Left cardiac atrium (tissue), 4 donors: ENCODE measurements at regions of chr14 and their contacts with region 1.

Region 1: GRCh38 chr14:73785873-73786695 is 65.5 kb upstream of the PTGR2 start:
- DNase-seq: peak; percentile 83
- ATAC-seq: peak; percentile 72 to 75

Region 2: DNA sequence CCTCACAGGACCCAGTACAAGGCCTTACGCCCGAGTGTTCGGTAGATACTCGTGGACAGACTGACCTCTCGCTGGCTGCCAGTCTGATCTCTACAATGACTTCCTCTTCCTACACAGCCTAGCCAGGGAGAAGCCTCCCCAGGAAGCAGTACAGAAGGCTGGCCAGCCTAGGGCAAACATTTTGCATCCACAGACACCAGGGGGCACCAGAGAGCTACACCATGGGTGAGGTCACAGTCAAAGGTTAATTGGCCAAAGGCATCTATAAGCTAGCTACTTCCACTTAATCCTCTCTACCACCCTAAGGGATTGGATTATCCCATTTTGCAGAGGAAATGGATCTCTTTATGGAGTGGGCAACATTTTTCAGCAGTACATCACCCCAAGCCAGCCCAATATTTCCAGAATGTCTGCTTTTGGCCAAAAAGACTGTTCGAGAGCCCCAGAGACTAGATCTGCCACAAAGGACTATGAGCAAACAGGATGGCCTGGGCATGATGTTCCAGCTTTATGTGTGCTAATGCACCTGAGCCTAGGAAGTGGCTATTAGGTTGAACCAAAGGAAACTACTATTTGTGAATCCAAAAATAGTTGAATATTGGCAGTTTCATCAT is 57.3 kb before region 1 on chr14:
- intact Hi-C with region 1: loop called (anchors 10 kb)
- DNase-seq: peak; percentile 89
- ATAC-seq: peak; percentile 60 to 62

Region 3: GRCh38 chr14:73741386-73741875 is 44.7 kb before region 1 on chr14:
- intact Hi-C with region 1: loop called (anchors 5 to 10 kb)
- DNase-seq: peak; percentile 85
- ATAC-seq: peak; percentile 70 to 85

Region 4: DNA sequence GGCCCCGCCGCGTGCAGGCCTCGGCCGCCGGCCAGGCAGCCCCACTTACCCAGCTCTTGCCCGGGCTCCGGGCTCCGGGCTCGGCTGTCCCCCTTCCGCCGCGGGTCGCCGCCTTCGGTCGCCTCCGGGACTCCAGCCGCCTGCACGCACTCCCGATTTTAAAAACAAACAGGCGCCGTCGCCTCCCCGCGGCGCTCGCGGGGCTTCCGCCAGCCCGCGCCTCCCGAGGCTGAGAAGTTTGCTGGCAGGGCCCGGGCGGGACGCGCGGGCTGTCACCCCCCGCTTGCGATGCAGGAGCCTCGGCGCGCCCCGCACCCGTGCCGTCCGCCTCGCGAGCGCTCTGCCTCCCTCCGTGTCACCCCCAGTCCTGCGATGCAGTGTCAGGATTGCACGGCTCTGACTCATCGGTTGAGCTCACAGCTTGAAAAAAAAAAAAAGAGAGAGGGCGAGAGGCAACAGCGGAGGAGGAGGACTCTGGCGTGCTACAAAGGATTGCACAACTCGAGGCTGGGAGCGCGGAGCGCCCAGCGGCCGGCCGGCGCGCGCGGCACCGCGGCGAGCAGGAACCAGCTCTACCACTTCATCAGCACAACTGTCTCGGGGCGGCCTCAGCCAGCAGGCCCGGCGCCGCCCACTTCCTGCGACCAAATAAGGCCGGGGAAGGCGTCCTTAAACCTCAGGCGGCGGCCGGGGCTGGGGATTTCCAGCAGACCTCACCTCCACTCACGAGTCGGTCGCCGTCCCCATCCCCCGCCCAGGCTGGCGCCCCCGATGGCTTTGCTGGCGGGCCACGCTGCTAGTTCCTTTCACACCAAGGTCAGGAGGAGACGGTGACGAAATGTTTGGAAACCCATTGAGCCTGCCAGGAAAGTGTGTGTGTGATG is 26.1 kb before region 1 on chr14:
- intact Hi-C with region 1: loop called in 1 of 2 experiments (anchors 2 kb)
- DNase-seq: peak; percentile 98
- ATAC-seq: peak; percentile 82 to 86

Region 5: DNA sequence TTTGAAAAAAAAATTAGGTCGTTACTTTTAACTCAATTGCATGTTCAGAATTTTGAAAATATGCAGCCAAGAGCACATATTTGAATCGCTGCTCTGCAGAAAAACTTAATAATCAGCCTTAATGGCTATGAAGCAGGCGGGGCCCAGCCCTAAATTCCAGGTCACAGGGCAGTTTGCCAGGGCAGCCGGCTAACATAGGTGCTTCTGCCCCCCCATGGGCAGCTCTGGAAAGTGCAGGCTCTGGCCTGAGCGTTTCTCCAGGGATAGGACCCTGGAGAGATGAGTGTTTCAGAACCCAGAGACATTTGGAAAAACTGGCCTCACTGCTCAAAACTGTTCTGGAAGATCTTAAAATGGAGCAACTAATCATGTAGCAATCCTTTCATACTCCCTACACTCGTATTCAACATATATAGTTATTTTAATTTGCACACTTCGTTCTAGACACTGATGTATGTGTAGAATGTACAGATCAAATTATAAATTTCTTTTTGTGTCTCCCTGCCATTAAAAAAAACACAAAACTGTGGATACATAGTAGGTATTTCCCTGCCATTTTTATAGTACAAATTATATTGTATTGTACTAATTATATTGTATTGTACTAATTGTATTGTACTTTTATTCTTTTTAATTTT is 39.6 kb after region 1 on chr14:
- intact Hi-C with region 1: loop called in 1 of 2 experiments (anchors 5 kb)
- DNase-seq: peak; percentile 95
- ATAC-seq: peak; percentile 95 to 97